Head of caudate nucleus (tissue), 42 donors: ENCODE measurements at regions of chr6 and their contacts with region 1.

Region 1: DNA sequence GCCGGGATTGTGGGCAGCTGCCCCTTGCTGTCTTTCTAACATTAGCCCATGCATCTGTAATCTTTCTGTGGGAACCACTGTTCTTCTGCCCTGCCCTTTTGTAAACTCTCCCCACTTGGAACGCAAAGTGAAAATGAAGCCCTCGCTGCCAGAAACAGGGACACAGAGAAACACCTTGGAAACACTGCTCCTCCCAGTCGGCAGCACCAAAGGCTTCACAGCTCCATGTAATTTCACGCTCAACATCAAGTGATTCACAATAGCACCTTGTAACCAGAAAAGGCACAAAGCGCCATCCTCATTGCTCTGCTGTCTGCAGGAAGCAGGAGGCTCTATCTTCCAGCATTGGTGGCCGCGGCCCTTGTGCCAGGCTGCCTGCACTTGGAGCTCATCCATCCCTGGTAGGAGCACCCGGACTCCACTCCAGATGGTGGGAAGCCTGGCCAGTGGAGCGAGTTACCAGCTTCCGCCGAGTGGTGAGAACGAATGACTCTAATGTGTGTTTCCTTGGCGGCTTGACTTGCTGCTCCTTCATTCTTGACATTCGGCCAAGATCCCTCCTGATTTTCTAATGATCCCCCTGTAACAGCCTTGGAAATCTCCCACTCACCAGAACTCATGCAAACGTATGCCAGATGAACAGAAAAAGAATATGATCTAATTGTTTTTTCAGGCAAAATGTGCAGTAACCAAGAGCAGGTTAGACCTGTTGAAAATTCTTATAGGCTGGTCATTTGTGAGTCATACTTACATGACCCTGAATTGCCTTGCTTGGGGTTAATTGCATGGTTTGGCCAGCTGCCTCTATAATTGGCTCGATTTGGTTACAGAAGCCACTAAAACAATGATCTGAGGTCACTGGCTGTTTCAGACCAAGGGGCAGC is 169.1 kb upstream of the CDYL start:
- DNase-seq: peak; percentile 48 to 89 (median 73)

Region 2: DNA sequence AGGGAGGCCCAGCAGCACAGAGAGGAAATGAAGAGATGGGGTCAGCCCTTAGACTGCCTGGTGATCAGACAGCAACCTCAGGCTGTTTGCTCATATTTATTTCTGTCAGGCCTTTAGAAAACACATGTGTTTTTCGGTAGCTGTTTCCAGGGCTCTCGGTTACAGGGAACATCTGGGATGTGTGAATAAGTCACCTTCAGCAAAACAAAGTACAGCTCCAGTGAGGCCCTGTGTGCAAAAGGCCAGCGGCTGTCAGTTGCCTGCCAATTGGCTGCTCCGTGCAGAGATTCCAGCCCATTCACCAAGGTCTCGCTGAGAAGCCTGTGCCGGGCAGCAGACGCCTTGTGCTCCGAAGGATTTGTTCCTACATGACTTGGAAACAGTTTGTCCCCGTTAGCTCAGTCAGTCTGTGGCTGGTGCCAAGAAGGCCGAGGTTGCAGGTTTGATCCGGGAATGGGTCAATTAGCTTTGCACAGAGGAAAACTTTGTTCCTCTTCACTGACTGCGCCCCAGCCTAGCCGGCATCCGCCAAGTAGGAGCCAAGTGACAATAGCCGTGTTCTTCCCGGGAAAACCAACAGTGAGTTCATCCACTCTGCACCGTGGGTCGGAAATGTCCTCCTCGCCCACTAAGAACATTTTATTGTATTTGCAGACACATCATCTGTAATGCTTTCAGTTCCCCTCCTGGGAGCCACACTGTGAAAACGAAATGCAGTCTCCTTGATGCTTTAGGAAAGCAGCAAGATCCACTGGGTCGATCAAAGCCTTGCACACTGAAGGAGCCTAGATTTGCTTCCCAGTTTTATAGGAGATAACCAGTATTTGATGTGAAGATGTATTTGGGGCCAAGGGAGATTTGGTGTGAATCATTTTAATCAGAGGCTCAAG is 146.2 kb before region 1 on chr6:
- intact Hi-C with region 1: no loop called
- DNase-seq: peak; percentile 25 to 89 (median 64)

Region 3: DNA sequence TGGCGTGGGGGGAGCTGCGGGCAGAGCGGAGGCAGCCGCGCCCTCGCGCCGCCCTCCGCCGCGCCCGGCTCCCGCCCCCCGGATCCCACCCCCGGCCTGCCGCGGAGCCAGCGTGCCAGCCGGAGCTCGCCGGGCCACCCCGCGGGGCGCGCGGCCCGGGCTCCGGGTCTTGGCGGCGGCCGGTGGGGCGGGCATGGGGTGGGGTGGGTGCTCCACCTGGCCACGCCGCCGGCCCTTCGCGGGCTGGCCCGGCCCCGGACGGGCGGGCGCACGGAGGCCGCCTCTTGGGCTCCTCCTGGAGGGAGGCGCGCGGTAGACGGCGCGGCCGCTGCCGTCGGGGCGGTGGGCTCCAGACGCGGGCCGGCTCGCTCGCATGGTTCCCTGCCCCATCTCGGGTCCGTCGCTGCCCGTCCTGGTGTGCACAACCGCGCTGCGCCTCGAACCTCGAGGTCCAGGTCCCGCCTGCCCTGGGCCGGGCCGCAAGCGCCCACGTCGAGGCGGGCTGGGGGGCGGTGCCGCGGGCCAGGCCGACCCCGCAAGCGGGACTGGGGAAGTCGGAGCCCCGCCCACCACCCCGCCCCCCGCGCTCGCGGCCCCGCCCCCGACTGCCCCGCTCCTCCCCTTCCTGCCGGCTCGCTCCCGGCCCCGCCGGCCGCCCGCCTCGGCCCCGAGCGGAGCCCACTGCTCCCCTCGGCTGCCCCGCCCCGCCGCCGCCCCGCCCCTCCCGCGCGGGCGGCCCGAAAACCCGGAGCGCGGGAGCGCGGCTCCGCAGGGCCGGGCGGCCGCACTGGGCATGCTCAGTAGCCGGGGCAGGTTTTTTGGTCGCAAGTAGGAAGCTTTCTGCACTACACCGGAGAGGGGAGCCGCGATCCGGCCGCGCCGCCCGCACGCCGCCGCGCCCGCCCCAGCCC is 168.8 kb after region 1 on chr6 and contains the start of gene CDYL:
- intact Hi-C with region 1: loop called (anchors 5 kb)
- DNase-seq: peak; percentile 35 to 92 (median 82)